ENCODE measurements at regions of chr12 and their contacts with region 1.

Region 1: GRCh38 chr12:93254911-93255310 is 122.8 kb upstream of the NUDT4 start:
- DNase-seq: no peak
- H3K4me3 ChIP-seq: no peak overlapping the region
- H3K27ac ChIP-seq: no peak overlapping the region
- H3K4me1 ChIP-seq: no peaks in the 10 kb centered on the region
- H3K27me3 ChIP-seq: no peaks in the 10 kb centered on the region
- CTCF ChIP-seq: no peak
- POLR2A ChIP-seq: no peak

Region 2: GRCh38 chr12:93019975-93020630 is 234.8 kb before region 1 on chr12:
- intact Hi-C with region 1: loop called (anchors 5 kb)
- DNase-seq: peak in 1 of 2 donors; percentile 22
- H3K4me3 ChIP-seq: no peak overlapping the region
- H3K27ac ChIP-seq: peak overlapping the region; percentile 20 to 40
- H3K4me1 ChIP-seq: no peaks in the 10 kb centered on the region
- H3K27me3 ChIP-seq: no peaks in the 10 kb centered on the region
- CTCF ChIP-seq: no peak
- POLR2A ChIP-seq: no peak

Region 3: DNA sequence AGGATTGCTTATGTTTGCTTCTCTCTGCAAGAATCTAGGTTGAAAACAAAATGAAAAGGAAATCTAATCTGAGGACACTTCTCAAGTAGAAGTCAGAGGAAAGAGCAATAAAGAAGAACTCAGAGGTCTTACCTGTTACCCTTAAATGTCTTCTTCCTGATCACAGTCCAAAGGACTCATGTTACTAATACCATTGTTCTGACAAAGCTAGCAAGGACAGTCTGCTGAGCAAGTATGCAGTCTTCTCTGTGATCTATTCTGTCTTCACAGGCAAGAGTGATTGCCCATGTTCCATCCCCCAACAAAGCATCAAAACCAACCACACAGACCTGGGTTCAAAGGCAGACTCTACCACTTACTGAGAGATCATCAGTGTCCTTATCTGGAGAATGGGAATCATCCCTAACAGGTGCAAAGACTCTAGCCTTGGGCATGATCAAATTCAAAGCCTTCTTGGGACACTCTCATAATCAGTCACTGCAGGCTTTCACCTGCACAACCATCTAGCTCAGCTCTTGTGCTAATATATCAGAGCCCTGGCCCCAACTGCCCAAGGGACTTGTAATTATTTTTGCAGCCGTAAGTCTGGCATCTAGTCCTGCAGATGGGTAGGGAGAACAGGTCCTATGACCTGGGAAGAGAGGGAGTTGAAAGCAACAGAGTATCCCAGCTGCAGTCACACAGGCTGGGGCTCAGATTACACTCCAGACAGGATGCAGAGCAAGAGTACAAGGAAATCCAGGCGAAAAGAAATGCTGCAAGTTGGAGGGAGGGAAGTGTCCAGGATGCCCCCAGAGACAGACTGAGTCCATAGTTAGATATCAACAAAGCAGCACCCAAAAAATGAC is 24.9 kb after region 1 on chr12:
- intact Hi-C with region 1: no loop called
- DNase-seq: no peak
- H3K4me3 ChIP-seq: no peak overlapping the region
- H3K27ac ChIP-seq: no peak overlapping the region
- H3K4me1 ChIP-seq: no peaks in the 10 kb centered on the region
- H3K27me3 ChIP-seq: no peaks in the 10 kb centered on the region
- CTCF ChIP-seq: no peak
- POLR2A ChIP-seq: no peak

Region 4: GRCh38 chr12:93322784-93323183 is 67.9 kb after region 1 on chr12:
- intact Hi-C with region 1: no loop called
- DNase-seq: no peak
- H3K4me3 ChIP-seq: no peak overlapping the region
- H3K27ac ChIP-seq: no peak overlapping the region
- H3K4me1 ChIP-seq: no peaks in the 10 kb centered on the region
- H3K27me3 ChIP-seq: no peaks in the 10 kb centered on the region
- CTCF ChIP-seq: no peak
- POLR2A ChIP-seq: no peak

Measured in breast epithelium (tissue), 4 donors.